Sigmoid colon (tissue), 7 donors: ENCODE measurements at regions of chr2 and their contacts with region 1.

Region 1: DNA sequence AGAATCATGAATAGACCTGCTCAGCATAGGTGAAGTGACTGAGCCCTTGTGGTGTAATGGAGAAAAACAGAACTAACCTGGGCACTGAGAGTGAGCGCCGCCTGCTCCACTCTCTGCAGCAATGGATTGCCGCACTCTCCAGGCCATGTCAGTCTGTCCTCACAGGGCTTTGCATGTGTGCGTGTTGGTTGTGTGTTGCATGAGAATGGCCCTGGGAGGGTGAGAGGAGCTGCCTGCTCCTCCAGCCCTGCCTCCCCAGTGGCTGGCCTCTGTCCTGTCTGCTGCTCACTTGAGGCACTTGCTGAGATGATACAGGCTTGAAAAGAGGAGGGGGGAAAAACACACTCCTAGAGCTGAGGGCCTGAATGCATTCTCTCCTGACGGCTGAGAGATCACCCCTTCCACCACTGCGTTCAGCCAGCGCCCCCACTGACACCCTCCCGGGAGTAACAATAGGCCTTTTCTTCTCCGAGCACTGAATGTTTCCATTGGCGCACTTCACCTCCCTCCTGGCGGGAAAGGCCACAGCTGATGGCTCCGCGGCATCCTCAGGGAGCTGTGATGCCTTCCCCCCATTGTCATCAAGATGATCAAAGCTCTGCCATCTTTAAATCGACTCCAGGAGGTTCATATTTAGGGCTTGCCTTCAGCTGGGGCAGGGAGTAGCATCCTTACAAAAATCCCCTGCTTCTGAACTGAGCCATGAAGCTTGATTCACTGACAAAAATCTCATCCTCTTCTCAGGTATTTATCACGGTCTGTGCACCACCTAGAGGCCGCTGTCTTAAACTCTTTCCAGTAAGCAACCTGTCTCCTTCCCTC is 49.9 kb upstream of the DAPL1 start:
- DNase-seq: no peak
- H3K4me3 ChIP-seq: no peak overlapping the region
- H3K27ac ChIP-seq: no peak overlapping the region
- H3K4me1 ChIP-seq: no peaks in the 10 kb centered on the region
- H3K27me3 ChIP-seq: peaks cover 0 to 18% (median 0%) of the 10 kb centered on the region in 3 donors
- CTCF ChIP-seq: peak in 2 of 4 experiments; percentile 23 to 26
- EP300 ChIP-seq: no peak
- POLR2A ChIP-seq: no peak

Region 2: GRCh38 chr2:158024288-158024898 is 720.9 kb before region 1 on chr2:
- intact Hi-C with region 1: loop called (anchors 1 kb)
- DNase-seq: no peak
- H3K4me3 ChIP-seq: no peak overlapping the region
- H3K27ac ChIP-seq: no peak overlapping the region
- H3K4me1 ChIP-seq: no peaks in the 10 kb centered on the region
- H3K27me3 ChIP-seq: no peaks in the 10 kb centered on the region
- CTCF ChIP-seq: peak in 3 of 4 experiments; percentile 28 to 78 (median 69)
- EP300 ChIP-seq: no peak
- POLR2A ChIP-seq: no peak

Region 3: DNA sequence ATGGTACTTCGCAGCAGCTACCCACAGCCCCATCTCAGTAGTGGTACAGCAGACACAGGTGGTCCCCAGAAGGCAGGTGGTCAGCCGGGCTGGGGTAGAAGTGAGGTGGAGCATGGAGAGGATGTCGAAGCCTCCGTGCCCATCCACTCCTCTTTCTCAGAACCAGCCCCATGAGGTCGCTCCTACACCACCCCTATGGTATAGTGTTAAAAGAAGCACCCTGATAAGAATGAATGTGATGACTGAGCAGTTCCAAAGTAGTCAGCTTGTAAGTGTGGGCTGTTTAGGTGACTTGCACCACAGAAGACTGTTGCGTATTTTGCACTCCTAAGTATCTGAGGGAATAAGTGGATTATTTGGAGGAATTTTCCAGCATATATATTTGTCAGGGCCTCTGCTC is 429.9 kb after region 1 on chr2:
- intact Hi-C with region 1: no loop called
- DNase-seq: no peak
- H3K4me3 ChIP-seq: no peak overlapping the region
- H3K27ac ChIP-seq: no peak overlapping the region
- H3K4me1 ChIP-seq: peaks cover 0 to 4% (median 0%) of the 10 kb centered on the region in 4 donors
- H3K27me3 ChIP-seq: no peaks in the 10 kb centered on the region
- CTCF ChIP-seq: no peak
- EP300 ChIP-seq: no peak
- POLR2A ChIP-seq: no peak